Activated T-helper 1 cell treated with anti-CD3 and anti-CD28 coated beads, Interleukin-12 subunit alpha, Interleukin-12 subunit beta, Interleukin-2, Interleukin-4 antibody, amounts not matched to agents 30 ng/mL and 10 ng/mL and 1 ng/mL, durations not matched to agents 14 hours and 24 hours and 36 hours (primary cell): ENCODE measurements at regions of chr1 and their contacts with region 1.

Region 1: GRCh38 chr1:200409761-200410565 is at the start of gene ZNF281:
- DNase-seq: peak; percentile 93
- H3K4me3 Mint-ChIP-seq: peak within 1 kb of the TSS; percentile 98
- H3K27ac Mint-ChIP-seq: peak within 1 kb of the TSS; percentile 96
- H3K4me1 Mint-ChIP-seq: peaks cover 64% of the 10 kb centered on the region
- H3K27me3 Mint-ChIP-seq: peaks cover 2% of the 10 kb centered on the region
- total RNA-seq, gene ZNF281: 23.5 and 24.1 TPM in 2 replicates

Region 2: GRCh38 chr1:200258447-200259375 is 151.3 kb before region 1 on chr1:
- intact Hi-C with region 1: loop called (anchors 1 kb)
- DNase-seq: no peak
- H3K4me3 Mint-ChIP-seq: no peak overlapping the region
- H3K27ac Mint-ChIP-seq: no peak overlapping the region
- H3K4me1 Mint-ChIP-seq: peaks cover 35% of the 10 kb centered on the region
- H3K27me3 Mint-ChIP-seq: peaks cover 14% of the 10 kb centered on the region

Region 3: DNA sequence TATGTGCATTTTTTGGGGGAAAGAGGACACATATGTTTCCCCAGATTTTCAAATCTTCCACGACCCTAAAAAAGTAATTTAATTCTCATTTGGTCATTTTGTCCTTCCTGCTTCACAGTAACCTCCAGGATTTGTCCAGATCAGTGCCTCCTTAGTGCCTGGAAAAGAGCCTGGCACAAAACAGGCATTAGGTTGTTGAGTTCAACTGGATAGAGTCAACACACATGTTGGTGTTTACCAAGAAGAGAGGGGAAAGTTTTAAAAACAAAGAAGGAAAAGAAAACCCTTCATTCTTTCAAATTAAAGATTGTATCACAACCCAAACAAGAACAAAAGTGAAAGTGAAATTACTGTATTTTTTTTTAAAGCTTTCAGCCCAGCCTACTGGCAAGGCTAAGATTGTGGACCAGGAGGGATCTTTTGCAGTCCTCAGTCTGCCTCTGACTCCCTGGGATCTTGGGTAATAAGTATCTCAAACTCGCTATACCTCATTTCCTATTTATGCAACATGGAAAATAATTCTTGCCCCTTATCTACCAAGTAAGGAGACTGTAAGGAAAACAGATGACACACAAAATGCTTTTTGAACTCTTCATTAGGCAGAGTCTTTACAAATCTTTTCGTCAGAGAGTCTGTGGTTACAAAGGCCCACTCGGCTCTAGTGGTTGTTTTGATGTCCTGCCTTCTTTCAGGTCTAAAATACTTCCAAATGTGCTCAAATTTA is 58.0 kb before region 1 on chr1:
- intact Hi-C with region 1: loop called (anchors 1 kb)
- DNase-seq: no peak
- H3K4me3 Mint-ChIP-seq: peak overlapping the region; percentile 68
- H3K27ac Mint-ChIP-seq: peak overlapping the region; percentile 77
- H3K4me1 Mint-ChIP-seq: peaks cover 51% of the 10 kb centered on the region
- H3K27me3 Mint-ChIP-seq: peaks cover 2% of the 10 kb centered on the region

Region 4: GRCh38 chr1:200432564-200432963 is 22.6 kb after region 1 on chr1:
- intact Hi-C with region 1: loop called (anchors 2 kb)
- DNase-seq: no peak
- H3K4me3 Mint-ChIP-seq: no peak overlapping the region
- H3K27ac Mint-ChIP-seq: no peak overlapping the region
- H3K4me1 Mint-ChIP-seq: peaks cover 23% of the 10 kb centered on the region
- H3K27me3 Mint-ChIP-seq: peaks cover 2% of the 10 kb centered on the region

Region 5: DNA sequence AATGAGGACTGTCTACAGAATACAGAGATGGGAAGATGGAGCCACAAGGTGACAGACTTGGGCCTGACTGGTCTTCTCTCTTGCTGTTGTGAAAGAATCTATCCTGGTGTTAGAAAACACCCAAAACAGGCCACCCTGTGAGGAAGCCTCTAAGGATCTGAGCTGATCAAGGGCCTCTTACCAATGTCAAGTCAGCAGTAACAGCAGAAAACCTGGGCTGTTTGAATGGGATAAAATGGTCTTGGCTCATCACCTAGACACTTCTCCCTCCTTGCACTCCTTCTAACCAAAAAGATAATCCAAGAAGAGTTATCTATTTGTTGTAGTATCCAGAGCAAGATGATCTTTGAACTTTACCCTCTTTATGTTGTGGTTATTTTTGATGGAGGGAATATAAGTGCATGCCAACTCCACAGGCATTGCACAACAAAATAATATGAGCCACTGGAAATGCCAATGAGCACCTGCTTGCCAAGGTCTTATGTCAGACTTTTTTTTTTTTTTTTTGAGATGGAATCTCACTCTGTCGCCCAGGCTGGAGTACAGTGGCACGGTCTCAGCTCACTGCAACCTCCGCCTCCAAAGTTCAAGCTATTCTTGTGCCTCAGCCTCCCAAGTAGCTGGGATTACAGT is 32.7 kb after region 1 on chr1:
- intact Hi-C with region 1: no loop called
- DNase-seq: no peak
- H3K4me3 Mint-ChIP-seq: no peak overlapping the region
- H3K27ac Mint-ChIP-seq: no peak overlapping the region
- H3K4me1 Mint-ChIP-seq: peaks cover 42% of the 10 kb centered on the region
- H3K27me3 Mint-ChIP-seq: no peaks in the 10 kb centered on the region

Region 6: GRCh38 chr1:200473698-200474371 is 63.9 kb after region 1 on chr1:
- intact Hi-C with region 1: loop called (anchors 1 kb)
- DNase-seq: no peak
- H3K4me3 Mint-ChIP-seq: peak overlapping the region; percentile 62
- H3K27ac Mint-ChIP-seq: peak overlapping the region; percentile 85
- H3K4me1 Mint-ChIP-seq: peaks cover 43% of the 10 kb centered on the region
- H3K27me3 Mint-ChIP-seq: peaks cover 2% of the 10 kb centered on the region

Region 7: GRCh38 chr1:200714569-200715187 is 304.7 kb after region 1 on chr1:
- intact Hi-C with region 1: no loop called
- DNase-seq: no peak
- H3K4me3 Mint-ChIP-seq: no peak overlapping the region
- H3K27ac Mint-ChIP-seq: no peak overlapping the region
- H3K4me1 Mint-ChIP-seq: no peaks in the 10 kb centered on the region
- H3K27me3 Mint-ChIP-seq: peaks cover 18% of the 10 kb centered on the region